Left ventricle myocardium superior (tissue), 1 donor: ENCODE measurements at regions of chrX and their contacts with region 1.

Region 1: GRCh38 chrX:115330498-115331168 is 41.1 kb downstream of the LUZP4 start:
- DNase-seq: peak; percentile 19
- ATAC-seq: peak; percentile 27

Region 2: GRCh38 chrX:115214151-115214550 is 116.5 kb before region 1 on chrX:
- intact Hi-C with region 1: no loop called
- DNase-seq: no peak
- ATAC-seq: no peak

Region 3: DNA sequence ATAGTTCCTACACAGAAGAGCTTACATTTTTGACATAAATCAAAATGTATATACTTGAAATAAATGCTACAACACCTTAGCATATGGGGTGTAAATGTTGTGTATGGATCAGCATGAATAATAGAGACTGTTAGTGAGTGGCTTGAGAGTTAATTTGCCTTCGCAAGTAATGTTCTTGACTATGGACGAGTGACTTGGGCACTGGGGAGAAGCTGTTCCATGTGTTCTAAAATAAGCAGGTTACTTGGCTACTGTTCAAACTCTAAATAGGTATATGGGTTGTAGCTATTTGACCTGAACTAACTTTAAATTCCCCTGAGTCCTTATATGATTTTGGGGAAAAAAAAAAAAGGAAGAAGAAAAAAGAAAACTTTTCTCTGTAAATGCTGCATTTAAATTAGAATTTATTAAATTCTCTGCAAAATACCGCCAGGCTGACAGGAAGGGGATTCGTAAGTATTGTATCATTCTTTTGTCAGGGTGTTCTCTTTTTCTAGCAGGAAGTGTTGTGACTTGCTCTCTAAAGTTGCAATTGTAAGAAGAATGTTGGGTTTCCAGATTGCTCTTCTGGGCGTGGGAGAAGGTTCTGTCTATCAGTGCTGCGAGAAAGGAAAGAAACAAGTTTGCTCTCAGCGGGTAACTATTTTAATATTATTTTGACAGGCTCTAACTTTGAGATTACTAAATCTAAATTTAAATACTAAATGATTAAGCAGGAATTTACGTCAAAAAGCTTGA is 262.5 kb after region 1 on chrX:
- intact Hi-C with region 1: no loop called
- DNase-seq: no peak
- ATAC-seq: peak; percentile 81

Region 4: GRCh38 chrX:115642895-115643530 is 312.4 kb after region 1 on chrX:
- intact Hi-C with region 1: loop called (anchors 5 kb)
- DNase-seq: no peak
- ATAC-seq: peak; percentile 25

Region 5: GRCh38 chrX:115690511-115691216 is 360.0 kb after region 1 on chrX:
- intact Hi-C with region 1: loop called (anchors 5 kb)
- DNase-seq: no peak
- ATAC-seq: peak; percentile 70